OCI-LY7 (cell line): ENCODE measurements at regions of chr14 and their contacts with region 1.

Region 1: DNA sequence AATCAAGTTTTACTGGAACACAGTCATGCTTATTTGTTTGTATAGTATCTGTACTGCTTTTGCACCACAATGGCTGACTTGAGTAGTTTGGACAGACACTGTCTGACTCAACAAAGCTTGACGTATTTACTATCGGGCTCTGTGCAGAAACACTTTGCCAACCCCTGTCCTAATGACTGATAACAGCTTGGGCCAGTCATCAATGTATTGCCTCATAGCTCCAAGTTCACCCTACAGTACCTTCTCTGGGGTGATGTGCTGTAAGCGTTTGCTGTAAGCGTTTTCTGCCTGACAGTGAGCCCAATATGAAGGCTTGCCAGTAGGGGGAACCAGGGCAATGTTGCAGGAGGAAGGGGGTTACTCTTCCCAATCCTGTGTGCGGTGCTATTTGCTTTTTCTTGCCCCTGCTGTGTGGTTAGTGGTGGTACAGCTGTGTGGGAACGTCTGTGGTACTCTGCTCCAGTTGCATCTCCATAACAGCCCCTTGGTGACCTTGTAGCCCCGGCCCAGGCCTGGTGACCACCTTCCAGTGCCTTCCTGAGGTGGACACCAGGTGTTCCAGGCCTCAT is 5.4 kb upstream of the CCDC177 start:
- DNase-seq: peak; percentile 57
- H3K4me3 ChIP-seq: no peak overlapping the region
- H3K27ac ChIP-seq: no peak overlapping the region
- H3K4me1 ChIP-seq: peaks cover 7% of the 10 kb centered on the region
- CTCF ChIP-seq: peak; percentile 76

Region 2: GRCh38 chr14:69373104-69373503 is 207.0 kb before region 1 on chr14:
- CTCF ChIA-PET with region 1: no interaction called
- POLR2A ChIA-PET with region 1: no interaction called
- intact Hi-C with region 1: no loop called
- DNase-seq: no peak
- H3K4me3 ChIP-seq: no peak overlapping the region
- H3K27ac ChIP-seq: no peak overlapping the region
- H3K4me1 ChIP-seq: no peaks in the 10 kb centered on the region
- CTCF ChIP-seq: no peak

Region 3: GRCh38 chr14:69593018-69593677 is 13.1 kb after region 1 on chr14:
- CTCF ChIA-PET with region 1: no interaction called
- POLR2A ChIA-PET with region 1: no interaction called
- intact Hi-C with region 1: no loop called
- DNase-seq: no peak
- H3K4me3 ChIP-seq: no peak overlapping the region
- H3K27ac ChIP-seq: no peak overlapping the region
- H3K4me1 ChIP-seq: no peaks in the 10 kb centered on the region
- CTCF ChIP-seq: no peak

Region 4: DNA sequence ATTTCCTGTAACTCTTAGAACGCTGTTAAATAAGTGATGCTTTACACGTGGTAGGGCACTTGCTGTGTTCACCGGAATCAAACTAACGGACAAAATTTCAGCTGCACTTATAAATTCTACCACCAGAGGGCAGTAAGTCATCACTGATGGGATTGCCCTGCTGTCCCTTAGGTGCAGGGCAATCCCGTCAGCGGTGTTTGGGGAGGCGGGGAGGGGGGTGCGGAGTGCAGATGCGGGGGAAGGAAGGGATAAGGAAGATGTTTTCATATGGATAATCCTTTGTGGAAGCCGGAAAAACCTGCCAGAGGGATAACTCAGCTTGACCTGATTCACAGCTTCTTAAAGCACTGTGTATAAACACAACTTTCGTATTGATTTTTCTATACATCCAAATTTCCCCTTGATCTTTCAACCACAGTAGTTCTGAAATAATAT is 238.7 kb after region 1 on chr14:
- CTCF ChIA-PET with region 1: no interaction called
- POLR2A ChIA-PET with region 1: no interaction called
- intact Hi-C with region 1: loop called (anchors 10 kb)
- DNase-seq: peak; percentile 78
- H3K4me3 ChIP-seq: no peak overlapping the region
- H3K27ac ChIP-seq: no peak overlapping the region
- H3K4me1 ChIP-seq: no peaks in the 10 kb centered on the region
- CTCF ChIP-seq: peak; percentile 97

Region 5: DNA sequence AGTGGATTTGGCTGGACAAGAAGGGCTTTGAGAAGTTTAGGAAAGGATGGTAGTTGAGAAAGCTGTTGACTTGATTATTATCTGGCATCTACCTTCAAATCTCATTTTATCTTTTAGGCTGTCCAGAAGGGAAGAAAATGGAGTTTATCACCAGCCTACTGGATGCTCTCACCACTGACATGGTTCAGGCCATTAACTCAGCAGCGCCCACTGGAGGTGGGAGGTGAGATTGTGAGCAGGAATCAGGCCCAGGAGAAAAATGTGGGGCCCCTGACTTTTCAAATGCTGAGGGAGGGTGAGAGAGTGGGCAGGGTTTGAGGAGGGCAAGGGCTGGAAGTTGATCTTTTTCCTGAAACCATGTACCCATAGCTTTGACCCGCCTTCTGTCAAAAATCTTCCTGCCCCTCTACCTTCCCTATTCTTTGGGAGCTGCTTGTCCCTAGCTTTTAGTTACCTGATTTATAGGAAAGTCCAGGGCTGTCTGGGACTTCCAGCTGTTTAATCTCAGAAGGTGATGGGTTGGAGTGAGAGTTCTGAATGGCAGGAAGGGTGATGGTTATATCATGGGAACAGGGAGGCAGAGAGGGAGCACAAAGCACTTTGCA is 433.3 kb after region 1 on chr14:
- CTCF ChIA-PET with region 1: no interaction called
- POLR2A ChIA-PET with region 1: no interaction called
- intact Hi-C with region 1: loop called (anchors 10 kb)
- DNase-seq: peak; percentile 37
- H3K4me3 ChIP-seq: no peak overlapping the region
- H3K27ac ChIP-seq: no peak overlapping the region
- H3K4me1 ChIP-seq: peaks cover 10% of the 10 kb centered on the region
- CTCF ChIP-seq: peak; percentile 84